Activated naive CD4-positive, alpha-beta T cell treated with anti-CD3 and anti-CD28 coated beads for 36 hours (primary cell): ENCODE measurements at regions of chr5 and their contacts with region 1.

Region 1: GRCh38 chr5:6291961-6292360 is 86.4 kb downstream of the MED10 start:
- DNase-seq: peak; percentile 19
- H3K4me3 Mint-ChIP-seq: no peak overlapping the region
- H3K27ac Mint-ChIP-seq: no peak overlapping the region
- H3K4me1 Mint-ChIP-seq: no peaks in the 10 kb centered on the region
- H3K27me3 Mint-ChIP-seq: no peaks in the 10 kb centered on the region

Region 2: GRCh38 chr5:4941957-4942830 is 1349.8 kb before region 1 on chr5:
- CTCF ChIA-PET with region 1: no interaction called
- intact Hi-C with region 1: no loop called
- DNase-seq: peak; percentile 13
- H3K4me3 Mint-ChIP-seq: no peak overlapping the region
- H3K27ac Mint-ChIP-seq: no peak overlapping the region
- H3K4me1 Mint-ChIP-seq: no peaks in the 10 kb centered on the region
- H3K27me3 Mint-ChIP-seq: no peaks in the 10 kb centered on the region

Region 3: GRCh38 chr5:6435356-6435755 is 143.4 kb after region 1 on chr5:
- CTCF ChIA-PET with region 1: no interaction called
- intact Hi-C with region 1: loop called (anchors 10 kb)
- DNase-seq: peak; percentile 28
- H3K4me3 Mint-ChIP-seq: no peak overlapping the region
- H3K27ac Mint-ChIP-seq: no peak overlapping the region
- H3K4me1 Mint-ChIP-seq: no peaks in the 10 kb centered on the region
- H3K27me3 Mint-ChIP-seq: peaks cover 41% of the 10 kb centered on the region

Region 4: DNA sequence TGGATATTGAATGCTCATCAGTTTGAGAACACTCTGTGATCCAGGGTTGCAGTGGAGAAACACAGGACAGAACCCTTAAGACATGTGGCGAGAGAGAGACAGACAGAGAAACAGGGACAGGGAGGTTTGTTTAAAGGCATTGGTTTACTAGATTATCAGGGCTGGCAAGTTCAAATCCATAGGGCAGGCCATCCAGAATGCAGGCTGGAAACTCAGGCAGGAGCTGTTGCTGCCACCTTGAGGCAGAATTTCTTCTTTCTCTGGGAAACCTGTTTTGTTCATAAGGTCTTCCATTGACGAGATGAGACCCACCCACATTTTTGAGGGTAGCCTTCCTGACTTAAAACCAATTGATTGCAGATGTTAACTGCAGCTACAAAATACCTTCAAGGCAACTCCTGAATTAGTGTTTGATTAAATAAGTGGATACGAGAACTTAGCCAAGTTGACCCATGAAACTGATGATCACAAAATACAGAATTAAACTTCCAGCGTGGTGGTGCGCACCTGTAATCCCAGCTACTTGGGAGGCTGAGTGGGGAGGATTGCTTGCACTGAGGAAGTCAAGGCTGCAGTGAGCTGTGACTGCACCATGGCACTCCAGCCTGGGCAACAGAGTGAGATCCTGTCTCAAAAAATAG is 285.0 kb after region 1 on chr5:
- CTCF ChIA-PET with region 1: no interaction called
- intact Hi-C with region 1: loop called (anchors 2 kb)
- DNase-seq: peak; percentile 44
- H3K4me3 Mint-ChIP-seq: no peak overlapping the region
- H3K27ac Mint-ChIP-seq: no peak overlapping the region
- H3K4me1 Mint-ChIP-seq: no peaks in the 10 kb centered on the region
- H3K27me3 Mint-ChIP-seq: peaks cover 20% of the 10 kb centered on the region

Region 5: GRCh38 chr5:6745706-6746222 is 453.8 kb after region 1 on chr5:
- CTCF ChIA-PET with region 1: no interaction called
- intact Hi-C with region 1: loop called (anchors 5 kb)
- DNase-seq: peak; percentile 35
- H3K4me3 Mint-ChIP-seq: no peak overlapping the region
- H3K27ac Mint-ChIP-seq: no peak overlapping the region
- H3K4me1 Mint-ChIP-seq: peaks cover 7% of the 10 kb centered on the region
- H3K27me3 Mint-ChIP-seq: no peaks in the 10 kb centered on the region